Caco-2 (cell line): ENCODE measurements at regions of chr22 and their contacts with region 1.

Region 1: DNA sequence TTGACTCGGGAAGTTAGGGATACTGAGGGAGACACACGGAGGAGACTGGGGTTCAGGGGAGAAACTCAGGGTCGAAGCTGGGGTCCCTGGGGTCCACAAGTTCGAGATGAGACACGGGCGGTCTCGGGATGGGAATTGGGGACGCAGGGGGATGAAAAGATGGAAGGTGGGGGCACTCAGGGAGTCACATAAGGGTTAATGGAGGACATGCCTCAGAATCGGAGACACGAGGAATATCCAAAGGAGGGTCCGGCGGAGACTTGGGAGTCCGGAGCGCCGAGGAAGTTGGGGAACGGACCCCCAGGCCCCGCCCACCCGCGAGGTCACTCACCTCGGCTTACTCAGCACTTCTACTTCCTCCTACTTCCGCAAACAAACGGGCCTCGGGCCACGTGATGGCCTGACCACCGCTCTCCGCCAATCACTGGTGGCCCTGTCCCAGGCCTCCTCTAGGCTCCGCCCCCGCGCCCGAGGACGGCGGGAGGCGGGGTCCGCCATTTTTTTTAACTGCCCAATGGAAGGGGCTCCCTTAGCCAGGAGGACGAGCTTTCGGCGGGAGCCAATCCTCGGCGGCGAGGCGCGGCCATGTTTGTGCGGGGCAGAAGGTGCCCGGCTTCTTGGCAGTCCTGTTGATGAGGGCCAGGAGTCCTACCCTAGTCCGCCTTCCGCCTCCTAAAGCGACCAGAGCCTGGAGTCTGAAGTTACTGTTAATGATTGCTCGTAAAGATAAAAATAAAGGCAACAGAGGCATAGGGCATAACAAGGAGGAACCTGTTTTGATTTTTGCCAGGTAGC is at the start of gene PLA2G6:
- DNase-seq: peak; percentile 99
- H3K4me3 ChIP-seq: peak within 1 kb of the TSS; percentile 55
- H3K4me3 Mint-ChIP-seq: peak within 1 kb of the TSS; percentile 97
- H3K27ac Mint-ChIP-seq: peak within 1 kb of the TSS; percentile 99
- H3K4me1 ChIP-seq: peaks cover 44% of the 10 kb centered on the region
- H3K4me1 Mint-ChIP-seq: peaks cover 32% of the 10 kb centered on the region
- H3K27me3 ChIP-seq: no peaks in the 10 kb centered on the region
- H3K27me3 Mint-ChIP-seq: no peaks in the 10 kb centered on the region
- CTCF ChIP-seq: no peak
- total RNA-seq, gene PLA2G6: 18.7 and 19.2 TPM in 2 replicates

Region 2: GRCh38 chr22:38114484-38115398 is 66.9 kb before region 1 on chr22:
- CTCF ChIA-PET with region 1: no interaction called
- POLR2A ChIA-PET with region 1: interaction called, 3 read pairs
- intact Hi-C with region 1: loop called (anchors 10 kb)
- DNase-seq: peak; percentile 72 to 87
- H3K4me3 ChIP-seq: no peak overlapping the region
- H3K4me3 Mint-ChIP-seq: no peak overlapping the region
- H3K27ac Mint-ChIP-seq: no peak overlapping the region
- H3K4me1 ChIP-seq: peaks cover 21% of the 10 kb centered on the region
- H3K4me1 Mint-ChIP-seq: peaks cover 10% of the 10 kb centered on the region
- H3K27me3 ChIP-seq: no peaks in the 10 kb centered on the region
- H3K27me3 Mint-ChIP-seq: peaks cover 2% of the 10 kb centered on the region
- CTCF ChIP-seq: peak; percentile 85 to 86

Region 3: GRCh38 chr22:38163844-38164550 is 17.7 kb before region 1 on chr22:
- CTCF ChIA-PET with region 1: no interaction called
- POLR2A ChIA-PET with region 1: interaction called, 3 read pairs
- intact Hi-C with region 1: loop called (anchors 1 kb)
- DNase-seq: peak; percentile 68 to 84
- H3K4me3 ChIP-seq: no peak overlapping the region
- H3K4me3 Mint-ChIP-seq: peak overlapping the region; percentile 18
- H3K27ac Mint-ChIP-seq: peak overlapping the region; percentile 73
- H3K4me1 ChIP-seq: peaks cover 31% of the 10 kb centered on the region
- H3K4me1 Mint-ChIP-seq: peaks cover 21% of the 10 kb centered on the region
- H3K27me3 ChIP-seq: no peaks in the 10 kb centered on the region
- H3K27me3 Mint-ChIP-seq: no peaks in the 10 kb centered on the region
- CTCF ChIP-seq: no peak

Region 4: GRCh38 chr22:38201710-38202436 is 20.2 kb after region 1 on chr22 and contains the start of gene MAFF:
- CTCF ChIA-PET with region 1: interaction called, 4 read pairs
- POLR2A ChIA-PET with region 1: interaction called, 15 read pairs
- intact Hi-C with region 1: loop called (anchors 2 kb)
- DNase-seq: peak; percentile 95 to 96
- H3K4me3 ChIP-seq: peak within 1 kb of the TSS; percentile 99
- H3K4me3 Mint-ChIP-seq: peak within 1 kb of the TSS; percentile 78
- H3K27ac Mint-ChIP-seq: peak within 1 kb of the TSS; percentile 43
- H3K4me1 ChIP-seq: peaks cover 9% of the 10 kb centered on the region; the same call in 1 of the 2 replicates
- H3K4me1 Mint-ChIP-seq: peaks cover 13% of the 10 kb centered on the region
- H3K27me3 ChIP-seq: no peaks in the 10 kb centered on the region
- H3K27me3 Mint-ChIP-seq: no peaks in the 10 kb centered on the region
- CTCF ChIP-seq: no peak
- total RNA-seq, gene MAFF: 6.8 and 9.0 TPM in 2 replicates

Region 5: DNA sequence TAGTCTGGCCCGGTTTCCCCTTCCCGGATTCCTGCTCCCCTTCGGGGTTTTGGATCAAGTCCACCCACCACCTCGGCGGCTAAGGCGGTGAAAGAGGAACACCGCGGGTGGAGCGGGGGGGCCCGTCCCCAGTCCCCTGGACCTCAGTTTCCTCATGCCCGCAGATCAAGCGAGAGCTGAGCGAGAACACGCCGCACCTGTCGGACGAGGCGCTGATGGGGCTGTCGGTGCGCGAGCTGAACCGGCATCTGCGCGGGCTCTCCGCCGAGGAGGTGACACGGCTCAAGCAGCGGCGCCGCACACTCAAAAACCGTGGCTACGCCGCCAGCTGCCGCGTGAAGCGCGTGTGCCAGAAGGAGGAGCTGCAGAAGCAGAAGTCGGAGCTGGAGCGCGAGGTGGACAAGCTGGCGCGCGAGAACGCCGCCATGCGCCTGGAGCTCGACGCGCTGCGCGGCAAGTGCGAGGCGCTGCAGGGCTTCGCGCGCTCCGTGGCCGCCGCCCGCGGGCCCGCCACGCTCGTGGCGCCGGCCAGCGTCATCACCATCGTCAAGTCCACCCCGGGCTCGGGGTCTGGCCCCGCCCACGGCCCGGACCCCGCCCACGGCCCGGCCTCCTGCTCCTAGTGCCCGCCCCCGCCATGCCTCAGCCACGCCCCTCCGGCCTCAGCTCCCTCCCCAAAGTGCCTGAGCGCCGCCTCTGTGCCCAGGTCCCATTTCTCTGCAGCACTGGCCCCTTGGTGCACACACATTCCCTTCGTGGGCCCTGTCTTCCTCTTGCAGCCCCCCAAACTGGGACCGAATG is 32.8 kb after region 1 on chr22:
- CTCF ChIA-PET with region 1: no interaction called
- POLR2A ChIA-PET with region 1: interaction called, 4 read pairs
- intact Hi-C with region 1: loop called (anchors 5 kb)
- DNase-seq: peak in 1 of 2 experiments; percentile 29
- H3K4me3 ChIP-seq: no peak overlapping the region
- H3K4me3 Mint-ChIP-seq: no peak overlapping the region
- H3K27ac Mint-ChIP-seq: peak overlapping the region; percentile 41
- H3K4me1 ChIP-seq: peaks cover 17% of the 10 kb centered on the region
- H3K4me1 Mint-ChIP-seq: peaks cover 5% of the 10 kb centered on the region
- H3K27me3 ChIP-seq: no peaks in the 10 kb centered on the region
- H3K27me3 Mint-ChIP-seq: no peaks in the 10 kb centered on the region
- CTCF ChIP-seq: no peak